Natural killer cell (primary cell): ENCODE measurements at regions of chr2 and their contacts with region 1.

Region 1: DNA sequence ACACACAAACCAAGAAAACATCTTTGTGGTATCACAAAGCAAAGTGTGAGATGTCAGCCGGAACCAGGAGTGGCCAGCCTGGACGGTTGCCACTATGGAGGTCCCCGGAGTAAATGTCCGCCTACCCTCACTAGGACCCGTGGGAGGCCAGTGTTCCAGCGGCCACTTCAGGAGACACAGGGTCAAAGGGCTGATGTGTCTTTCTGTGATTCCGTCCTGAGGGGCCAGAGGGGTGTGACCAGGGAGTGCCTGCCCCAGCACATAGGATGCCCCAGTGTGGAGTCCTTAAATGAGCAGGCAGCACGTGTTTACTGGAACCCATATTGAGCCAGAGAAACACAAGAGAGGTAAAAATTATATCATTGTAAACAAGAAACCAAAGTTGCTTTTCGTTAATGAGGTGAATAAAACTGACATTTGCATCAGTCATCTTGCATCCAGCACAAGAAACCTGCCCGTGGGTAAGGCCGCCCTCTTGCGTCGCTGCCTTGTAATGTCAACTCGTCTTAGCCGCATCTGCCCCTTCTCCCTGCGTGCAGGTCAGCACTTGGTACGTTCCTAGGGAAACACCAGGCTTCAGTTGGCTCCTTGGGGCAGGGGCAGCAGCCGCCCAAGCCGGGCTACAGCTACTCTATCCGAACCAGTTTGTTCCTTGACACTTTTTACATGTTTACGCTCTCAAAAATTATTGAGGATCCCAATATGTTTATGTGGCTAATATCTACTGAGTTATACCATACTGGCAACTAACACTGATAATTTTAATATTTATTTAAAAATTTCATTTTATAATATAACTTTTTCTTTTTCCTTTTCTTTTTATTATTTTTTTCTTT is 46.7 kb upstream of the LAPTM4A start:
- DNase-seq: peak; percentile 59 to 85
- ATAC-seq: peak; percentile 86 to 100 (median 98)
- H3K4me3 ChIP-seq: no peak overlapping the region
- H3K4me3 Mint-ChIP-seq: no peak overlapping the region
- H3K27ac ChIP-seq: no peak overlapping the region
- H3K27ac Mint-ChIP-seq: no peak overlapping the region
- H3K4me1 ChIP-seq: no peaks in the 10 kb centered on the region
- H3K4me1 Mint-ChIP-seq: peaks cover 0 to 6% of the 10 kb centered on the region in 2 donors
- H3K27me3 ChIP-seq: no peaks in the 10 kb centered on the region
- H3K27me3 Mint-ChIP-seq: peaks cover 0 to 16% of the 10 kb centered on the region in 2 donors
- CTCF ChIP-seq: peak; percentile 72

Region 2: DNA sequence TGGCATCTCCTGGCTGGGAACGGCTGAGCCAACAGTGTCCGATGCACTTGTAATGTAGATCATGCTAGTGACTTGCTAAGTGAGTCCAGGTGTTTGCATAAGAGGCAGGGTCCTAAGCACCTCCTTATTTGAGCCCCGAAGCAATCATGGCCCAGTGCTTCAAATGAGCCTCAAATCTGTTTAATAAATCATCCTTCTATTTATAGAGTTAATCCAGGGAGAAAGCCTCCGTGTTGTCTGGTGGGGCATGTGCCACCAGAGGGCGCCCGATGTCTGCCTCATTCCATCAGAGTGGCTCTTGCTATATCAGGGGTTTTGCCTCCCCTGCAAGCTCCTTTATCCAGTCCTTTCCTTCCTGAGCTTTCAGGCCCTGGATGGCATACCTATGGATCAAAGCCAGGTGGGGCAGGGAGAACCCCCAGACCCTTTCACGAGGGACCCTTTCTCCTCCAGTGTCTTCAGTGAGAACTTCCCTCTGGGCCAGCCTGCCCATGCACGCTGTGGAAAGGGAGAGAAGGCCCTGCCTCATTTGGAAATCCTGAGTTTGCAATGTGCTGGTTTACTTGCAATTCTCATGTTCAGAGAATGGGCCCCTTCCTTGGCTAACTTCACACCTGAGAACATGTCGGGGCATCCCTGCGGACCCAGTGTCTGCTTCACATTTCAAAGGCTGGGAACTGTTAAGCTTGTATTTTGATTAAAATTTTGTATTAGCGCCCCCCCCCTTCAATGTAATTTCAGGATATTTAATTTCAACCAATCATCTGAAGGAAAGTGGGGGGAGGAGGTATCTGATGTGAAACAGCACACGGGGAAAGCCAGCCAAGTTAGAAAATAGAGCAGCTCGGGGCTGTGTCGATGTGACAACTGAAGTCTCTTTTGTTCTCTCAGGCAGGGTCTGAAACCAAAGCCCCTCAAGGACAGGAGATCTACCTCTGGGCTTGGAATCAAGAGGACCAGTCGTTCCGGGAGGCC is 1577.4 kb before region 1 on chr2:
- intact Hi-C with region 1: loop called (anchors 5 kb)
- DNase-seq: peak; percentile 67 to 82
- ATAC-seq: peak; percentile 62 to 86 (median 65)
- H3K4me3 ChIP-seq: no peak overlapping the region
- H3K4me3 Mint-ChIP-seq: no peak overlapping the region
- H3K27ac ChIP-seq: no peak overlapping the region
- H3K27ac Mint-ChIP-seq: no peak overlapping the region
- H3K4me1 ChIP-seq: no peaks in the 10 kb centered on the region
- H3K4me1 Mint-ChIP-seq: no peaks in the 10 kb centered on the region
- H3K27me3 ChIP-seq: no peaks in the 10 kb centered on the region
- H3K27me3 Mint-ChIP-seq: peaks cover 6 to 11% of the 10 kb centered on the region in 2 donors
- CTCF ChIP-seq: peak; percentile 90

Region 3: DNA sequence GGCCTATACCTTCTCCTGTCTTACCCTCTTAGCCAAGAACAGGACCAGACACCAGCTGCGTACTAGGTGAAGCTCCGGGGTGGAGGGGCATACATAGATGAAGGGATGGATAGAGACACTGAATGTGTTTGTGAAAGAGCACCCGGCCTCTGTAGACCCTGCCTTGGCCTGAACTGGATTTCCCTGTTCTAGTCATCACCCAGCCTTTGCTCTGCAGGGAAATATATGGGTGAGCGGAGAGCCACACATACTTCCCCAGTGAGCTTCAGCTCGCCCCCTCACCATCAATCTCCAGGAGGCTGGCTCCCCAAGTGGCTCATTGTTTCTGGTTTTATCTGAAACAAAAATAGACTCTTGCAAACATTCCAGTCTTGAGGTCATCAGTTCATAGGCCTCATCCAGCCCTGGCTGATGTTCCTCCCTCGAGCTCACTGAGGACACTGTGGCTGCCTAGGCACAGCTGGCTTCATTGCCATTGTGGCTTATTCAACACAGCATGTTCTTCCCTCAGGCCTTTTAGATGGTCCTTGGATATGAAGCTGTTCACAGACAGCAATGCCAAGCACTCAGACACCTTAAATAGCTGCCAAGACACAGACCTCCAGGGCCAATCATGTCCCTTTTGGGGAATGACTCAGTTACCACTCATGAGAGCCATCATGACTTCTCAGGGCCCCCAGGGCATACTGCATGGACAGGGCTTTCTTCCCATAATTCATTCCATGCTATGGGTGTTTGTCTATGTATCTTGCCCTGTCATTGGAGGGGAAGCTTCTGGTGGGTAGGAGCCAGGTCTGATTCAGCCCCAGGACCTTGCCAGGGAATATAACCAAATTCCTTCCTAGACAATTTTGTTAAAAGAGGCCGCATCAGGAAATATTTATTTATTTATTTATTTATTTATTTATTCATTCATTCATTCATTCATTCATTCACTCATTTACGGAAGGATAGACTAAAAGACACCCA is 278.7 kb before region 1 on chr2:
- intact Hi-C with region 1: no loop called
- DNase-seq: no peak
- ATAC-seq: no peak
- H3K4me3 ChIP-seq: no peak overlapping the region
- H3K4me3 Mint-ChIP-seq: no peak overlapping the region
- H3K27ac ChIP-seq: no peak overlapping the region
- H3K27ac Mint-ChIP-seq: no peak overlapping the region
- H3K4me1 ChIP-seq: no peaks in the 10 kb centered on the region
- H3K4me1 Mint-ChIP-seq: no peaks in the 10 kb centered on the region
- H3K27me3 ChIP-seq: peaks cover 6% of the 10 kb centered on the region
- H3K27me3 Mint-ChIP-seq: peaks cover 0 to 3% of the 10 kb centered on the region in 2 donors
- CTCF ChIP-seq: no peak

Region 4: DNA sequence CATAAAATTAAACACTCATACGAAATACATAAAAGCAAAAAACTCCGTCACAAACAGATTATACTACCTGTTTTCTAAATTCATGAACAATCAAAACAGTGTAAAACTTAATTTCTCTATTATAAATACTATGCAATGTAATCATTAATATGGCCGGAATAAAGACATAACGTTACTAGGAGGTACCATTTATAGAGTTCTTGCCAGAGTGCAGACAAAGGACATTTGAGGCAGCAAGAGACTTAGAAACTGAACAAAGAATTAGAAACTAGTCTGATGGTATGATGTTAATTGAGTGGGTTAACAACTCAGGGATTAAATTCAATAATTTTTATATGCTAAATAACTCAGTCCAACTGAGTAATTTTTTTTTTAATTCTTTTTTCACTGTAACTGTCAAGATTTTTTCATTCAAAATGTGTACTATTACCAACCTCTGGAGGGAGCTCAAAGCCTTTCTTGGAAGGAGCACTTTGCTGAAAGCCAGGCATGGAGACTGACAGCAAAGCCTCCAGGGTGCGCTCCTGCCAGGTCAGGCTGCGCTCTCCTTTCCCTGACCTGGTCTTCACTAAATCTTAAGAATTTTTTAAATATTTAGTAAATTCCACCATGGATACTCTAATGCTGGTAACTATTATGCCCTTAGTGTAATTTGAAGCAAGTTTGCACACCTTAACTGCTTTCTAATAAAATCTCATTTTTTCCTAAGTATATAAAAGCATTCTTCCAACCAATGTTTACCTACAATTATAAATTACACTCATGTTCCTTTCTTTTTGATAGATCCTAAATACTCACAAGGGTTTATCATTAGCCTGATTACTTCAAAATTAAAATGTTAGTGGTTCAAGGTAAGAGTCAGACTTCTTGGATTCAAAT is 142.3 kb before region 1 on chr2:
- intact Hi-C with region 1: loop called (anchors 1 kb)
- DNase-seq: peak; percentile 17 to 74
- ATAC-seq: peak; percentile 82 to 96 (median 89)
- H3K4me3 ChIP-seq: no peak overlapping the region
- H3K4me3 Mint-ChIP-seq: no peak overlapping the region
- H3K27ac ChIP-seq: no peak overlapping the region
- H3K27ac Mint-ChIP-seq: no peak overlapping the region
- H3K4me1 ChIP-seq: no peaks in the 10 kb centered on the region
- H3K4me1 Mint-ChIP-seq: no peaks in the 10 kb centered on the region
- H3K27me3 ChIP-seq: no peaks in the 10 kb centered on the region
- H3K27me3 Mint-ChIP-seq: no peaks in the 10 kb centered on the region
- CTCF ChIP-seq: peak; percentile 69

Region 5: DNA sequence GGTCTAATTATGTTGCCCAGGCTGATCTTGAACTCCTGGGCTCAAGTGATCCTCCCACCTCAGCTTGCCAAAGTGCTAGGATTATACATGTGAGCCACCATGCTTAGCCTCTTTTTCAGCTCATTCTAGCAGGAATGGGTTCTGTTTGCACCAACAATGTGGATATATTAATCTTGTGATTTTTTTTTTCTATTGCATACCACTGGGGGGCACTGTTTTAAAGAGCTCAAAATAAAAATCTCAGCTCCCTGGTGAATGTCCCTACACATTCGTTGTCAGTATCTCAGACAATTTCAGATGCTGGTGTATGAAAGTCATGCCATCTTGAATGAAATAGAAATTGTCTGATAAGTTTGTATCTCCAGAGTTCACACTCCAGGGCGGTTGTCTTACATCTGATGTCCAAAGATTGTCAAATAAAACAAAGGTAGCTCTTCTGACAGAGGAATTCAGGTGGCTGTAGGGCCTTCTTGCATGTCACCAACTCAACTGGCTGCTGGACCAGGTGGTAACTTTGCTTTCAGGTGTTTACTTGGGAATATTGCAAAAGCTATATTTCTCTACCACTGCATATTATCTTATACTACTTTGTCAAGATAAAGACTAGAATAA is 82.5 kb before region 1 on chr2:
- intact Hi-C with region 1: loop called (anchors 1 kb)
- DNase-seq: peak in 1 of 2 donors; percentile 69
- ATAC-seq: peak; percentile 54 to 62 (median 54)
- H3K4me3 ChIP-seq: no peak overlapping the region
- H3K4me3 Mint-ChIP-seq: no peak overlapping the region
- H3K27ac ChIP-seq: no peak overlapping the region
- H3K27ac Mint-ChIP-seq: no peak overlapping the region
- H3K4me1 ChIP-seq: peaks cover 10% of the 10 kb centered on the region
- H3K4me1 Mint-ChIP-seq: peaks cover 7 to 10% of the 10 kb centered on the region in 2 donors
- H3K27me3 ChIP-seq: peaks cover 20% of the 10 kb centered on the region
- H3K27me3 Mint-ChIP-seq: peaks cover 28 to 36% of the 10 kb centered on the region in 2 donors
- CTCF ChIP-seq: peak; percentile 66

Region 6: GRCh38 chr2:20065885-20066602 is 32.1 kb before region 1 on chr2:
- intact Hi-C with region 1: no loop called
- DNase-seq: peak in 1 of 2 donors; percentile 10
- ATAC-seq: no peak
- H3K4me3 ChIP-seq: no peak overlapping the region
- H3K4me3 Mint-ChIP-seq: no peak overlapping the region
- H3K27ac ChIP-seq: no peak overlapping the region
- H3K27ac Mint-ChIP-seq: no peak overlapping the region
- H3K4me1 ChIP-seq: no peaks in the 10 kb centered on the region
- H3K4me1 Mint-ChIP-seq: no peaks in the 10 kb centered on the region
- H3K27me3 ChIP-seq: no peaks in the 10 kb centered on the region
- H3K27me3 Mint-ChIP-seq: peaks cover 0 to 16% of the 10 kb centered on the region in 2 donors
- CTCF ChIP-seq: no peak